Dendritic cell treated with granulocyte-macrophage colony-stimulating factor and Interleukin-4, amounts not matched to agents 40 ng/mL and 50 ng/mL, for 4 days (primary cell): ENCODE measurements at regions of chr12 and their contacts with region 1.

Region 1: GRCh38 chr12:26274441-26275312 is 79.3 kb downstream of the SSPN start:
- H3K4me3 Mint-ChIP-seq: no peak overlapping the region
- H3K27ac Mint-ChIP-seq: peak overlapping the region; percentile 86
- H3K4me1 Mint-ChIP-seq: peaks cover 73% of the 10 kb centered on the region
- H3K27me3 Mint-ChIP-seq: peaks cover 39% of the 10 kb centered on the region

Region 2: DNA sequence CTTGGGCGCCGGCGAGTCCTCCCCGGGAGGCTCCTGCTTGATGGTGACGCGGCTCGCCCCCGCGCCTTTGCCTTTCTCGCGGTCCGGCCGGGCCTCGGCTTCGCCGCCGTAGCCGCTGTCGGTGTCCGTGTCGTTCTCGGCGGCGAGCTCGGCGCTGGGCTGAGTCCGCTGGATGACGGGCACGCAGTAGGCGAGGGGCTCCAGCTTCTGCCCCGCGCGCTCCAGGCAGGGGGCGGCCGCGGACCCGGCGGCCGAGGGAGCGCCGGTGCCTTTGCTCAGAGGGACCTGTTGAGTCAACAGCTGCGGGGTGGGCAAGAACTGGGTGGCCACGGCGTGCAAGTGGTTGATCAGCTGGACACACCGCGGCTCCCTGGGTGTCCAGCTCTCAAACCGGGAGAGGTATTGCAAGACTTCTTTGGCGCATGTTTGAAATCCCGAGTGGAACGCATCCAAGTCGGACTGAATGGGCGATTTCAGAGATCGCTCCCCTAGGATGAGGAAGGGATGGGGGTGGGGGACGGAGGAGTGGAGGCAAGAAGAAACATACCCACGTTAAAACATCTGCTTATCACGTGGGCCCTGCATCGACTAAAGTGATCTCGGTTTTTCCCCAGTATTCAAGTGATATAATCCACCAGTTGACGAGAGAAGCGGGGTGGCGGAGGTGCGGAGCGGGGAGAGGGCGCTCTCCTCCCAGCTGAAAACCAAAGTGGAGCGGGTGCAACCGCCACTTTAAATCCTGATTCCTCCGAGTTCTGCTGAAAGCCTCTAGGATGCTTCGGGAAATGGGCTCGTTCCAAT is 151.8 kb before region 1 on chr12:
- intact Hi-C with region 1: loop called (anchors 5 kb)
- H3K4me3 Mint-ChIP-seq: peak overlapping the region; percentile 71
- H3K27ac Mint-ChIP-seq: no peak overlapping the region
- H3K4me1 Mint-ChIP-seq: peaks cover 57% of the 10 kb centered on the region
- H3K27me3 Mint-ChIP-seq: peaks cover 79% of the 10 kb centered on the region

Region 3: DNA sequence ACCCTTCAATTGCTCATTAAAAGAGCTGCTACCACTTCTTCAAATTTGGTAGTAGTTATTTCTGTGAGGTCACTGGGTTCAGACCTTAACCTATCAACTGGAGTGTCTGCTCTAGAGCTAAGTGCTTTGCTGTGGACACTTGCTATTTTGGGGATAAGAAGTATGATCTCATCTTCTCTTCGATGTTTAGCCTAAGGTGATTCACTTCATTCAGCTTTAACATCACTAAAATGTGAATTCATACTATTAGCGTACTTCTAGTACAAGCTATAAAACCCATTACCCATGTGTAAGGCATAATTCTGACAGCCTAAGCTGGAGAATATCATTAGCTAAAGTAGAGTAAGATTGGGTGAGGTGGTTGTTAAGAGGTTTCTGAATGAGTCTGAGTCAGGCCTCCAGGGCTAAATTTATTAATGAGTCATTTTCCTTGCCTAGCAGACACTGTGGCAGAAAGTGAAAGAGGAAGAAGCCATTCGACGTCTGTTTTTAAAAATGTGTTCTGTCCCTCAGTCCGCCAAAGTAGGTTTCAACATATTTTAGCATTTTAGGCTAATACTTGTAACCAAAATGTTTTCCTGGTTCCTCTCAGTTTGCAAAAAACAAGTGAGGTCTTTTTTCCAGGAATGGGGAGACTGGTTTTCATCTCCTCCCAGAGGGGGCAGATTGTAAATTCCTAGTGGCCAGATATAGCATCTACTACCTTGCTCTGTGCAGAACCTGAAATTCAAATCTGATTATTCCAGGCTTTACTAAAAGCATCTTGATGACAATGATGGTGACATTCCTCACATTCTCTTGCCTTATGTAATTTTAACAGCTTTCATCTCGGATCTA is 24.3 kb after region 1 on chr12:
- intact Hi-C with region 1: loop called (anchors 1 kb)
- H3K4me3 Mint-ChIP-seq: no peak overlapping the region
- H3K27ac Mint-ChIP-seq: peak overlapping the region; percentile 9
- H3K4me1 Mint-ChIP-seq: peaks cover 39% of the 10 kb centered on the region
- H3K27me3 Mint-ChIP-seq: peaks cover 21% of the 10 kb centered on the region